ENCODE measurements at regions of chr17 and their contacts with region 1.

Region 1: DNA sequence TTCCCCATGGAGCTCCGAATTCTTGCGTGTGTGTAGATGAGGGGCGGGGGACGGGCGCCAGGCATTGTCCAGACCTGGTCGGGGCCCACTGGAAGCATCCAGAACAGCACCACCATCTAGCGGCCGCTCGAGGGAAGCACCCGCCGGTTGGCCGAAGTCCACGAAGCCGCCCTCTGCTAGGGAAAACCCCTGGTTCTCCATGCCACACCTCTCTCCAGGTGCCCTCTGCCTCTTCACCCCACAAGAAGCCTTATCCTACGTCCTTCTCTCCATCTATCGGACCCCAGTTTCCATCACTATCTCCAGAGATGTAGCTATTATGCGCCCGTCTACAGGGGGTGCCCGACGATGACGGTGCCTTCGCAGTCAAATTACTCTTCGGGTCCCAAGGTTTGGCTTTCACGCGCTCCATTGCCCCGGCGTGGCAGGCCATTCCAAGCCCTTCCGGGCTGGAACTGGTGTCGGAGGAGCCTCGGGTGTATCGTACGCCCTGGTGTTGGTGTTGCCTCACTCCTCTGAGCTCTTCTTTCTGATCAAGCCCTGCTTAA is 617 bp upstream of the SENP3 start:
- DNase-seq: no peak
- H3K4me3 ChIP-seq: peak overlapping the region; percentile 85
- H3K27me3 ChIP-seq: no peaks in the 10 kb centered on the region
- CTCF ChIP-seq: peak; percentile 92

Region 2: DNA sequence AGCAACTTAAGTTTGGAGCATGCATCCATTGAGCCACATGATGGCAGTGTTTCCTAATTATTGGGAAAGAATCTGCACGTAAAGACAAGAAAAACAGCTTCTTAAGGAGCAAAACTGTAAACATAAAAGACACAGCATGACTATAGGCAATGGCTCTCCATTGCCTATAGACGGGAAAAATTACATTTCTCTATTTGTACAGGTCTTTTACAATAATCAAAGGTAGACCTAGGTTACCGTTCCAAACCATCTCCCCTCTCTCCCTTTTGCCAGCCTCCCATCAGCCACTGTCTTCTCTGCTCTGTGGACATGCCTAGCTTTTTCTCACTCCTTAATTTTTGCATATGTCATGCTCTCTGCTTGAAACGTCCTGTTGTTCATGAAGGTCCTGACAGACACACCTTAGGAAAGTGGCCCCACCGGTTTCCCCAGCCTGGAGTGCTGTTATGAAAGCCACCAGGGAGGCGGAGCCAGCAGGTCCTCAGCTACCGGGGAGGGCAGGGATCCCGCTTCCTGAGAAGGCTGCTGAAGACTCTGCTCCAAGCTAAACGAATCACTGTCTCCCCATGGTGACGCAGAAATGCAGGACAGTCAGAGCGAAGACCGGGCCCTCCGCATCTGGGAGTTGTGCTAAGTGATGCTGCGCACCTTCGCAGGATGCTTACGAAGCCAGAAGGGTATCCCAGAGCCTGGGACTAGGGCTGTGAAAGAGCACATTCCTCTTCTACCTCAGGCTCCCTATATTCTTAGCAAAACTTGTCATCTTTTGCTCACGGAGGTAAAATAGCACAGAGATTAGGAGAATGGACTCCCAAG is 515.0 kb before region 1 on chr17:
- CTCF ChIA-PET with region 1: interaction called, 14 read pairs
- POLR2A ChIA-PET with region 1: no interaction called
- DNase-seq: peak; percentile 35
- H3K4me3 ChIP-seq: no peak overlapping the region
- H3K27me3 ChIP-seq: peaks cover 16% of the 10 kb centered on the region
- CTCF ChIP-seq: peak; percentile 68

Region 3: GRCh38 chr17:7435221-7435675 is 125.9 kb before region 1 on chr17 and contains the start of gene TMEM102:
- CTCF ChIA-PET with region 1: interaction called, 21 read pairs
- POLR2A ChIA-PET with region 1: interaction called, 3 read pairs
- DNase-seq: peak; percentile 79
- H3K4me3 ChIP-seq: peak within 1 kb of the TSS; percentile 44
- H3K27me3 ChIP-seq: peaks cover 13% of the 10 kb centered on the region
- CTCF ChIP-seq: no peak
- polyA plus RNA-seq, gene TMEM102: 1.8 and 3.0 TPM in 2 replicates

Region 4: DNA sequence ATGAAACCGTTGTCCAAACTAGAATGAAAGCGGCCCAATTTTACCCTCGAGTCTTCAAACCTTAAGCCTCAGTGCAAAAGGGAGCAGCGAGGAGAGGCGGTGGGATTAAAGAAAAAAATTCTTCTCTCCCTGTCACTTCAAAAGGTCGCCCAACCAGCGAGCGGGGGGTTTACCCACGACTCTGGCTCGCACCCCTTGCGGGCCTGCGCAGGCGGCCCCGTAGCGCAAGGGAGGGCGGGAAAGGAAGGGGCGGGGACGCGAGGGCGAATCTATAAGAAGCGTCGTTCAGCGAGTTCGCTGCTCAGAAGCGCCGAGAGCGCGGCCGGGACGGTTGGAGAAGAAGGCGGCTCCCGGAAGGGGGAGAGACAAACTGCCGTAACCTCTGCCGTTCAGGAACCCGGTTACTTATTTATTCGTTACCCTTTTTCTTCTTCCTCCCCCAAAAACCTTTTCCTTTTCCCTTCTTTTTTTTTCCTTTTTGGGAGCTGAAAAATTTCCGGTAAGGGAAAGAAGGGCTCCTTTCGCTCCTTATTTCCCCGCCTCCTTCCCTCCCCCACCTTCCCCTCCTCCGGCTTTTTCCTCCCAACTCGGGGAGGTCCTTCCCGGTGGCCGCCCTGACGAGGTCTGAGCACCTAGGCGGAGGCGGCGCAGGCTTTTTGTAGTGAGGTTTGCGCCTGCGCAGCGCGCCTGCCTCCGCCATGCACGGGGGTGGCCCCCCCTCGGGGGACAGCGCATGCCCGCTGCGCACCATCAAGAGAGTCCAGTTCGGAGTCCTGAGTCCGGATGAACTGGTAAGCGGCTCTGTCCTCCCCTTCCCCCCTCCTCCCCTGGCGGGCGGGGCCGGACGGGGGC is 76.8 kb before region 1 on chr17 and contains the start of gene POLR2A:
- CTCF ChIA-PET with region 1: interaction called, 10 read pairs
- POLR2A ChIA-PET with region 1: interaction called, 5 read pairs
- DNase-seq: peak; percentile 92
- H3K4me3 ChIP-seq: peak within 1 kb of the TSS; percentile 67
- H3K27me3 ChIP-seq: no peaks in the 10 kb centered on the region
- CTCF ChIP-seq: no peak
- polyA plus RNA-seq, gene POLR2A: 21.5 and 27.7 TPM in 2 replicates

Region 5: DNA sequence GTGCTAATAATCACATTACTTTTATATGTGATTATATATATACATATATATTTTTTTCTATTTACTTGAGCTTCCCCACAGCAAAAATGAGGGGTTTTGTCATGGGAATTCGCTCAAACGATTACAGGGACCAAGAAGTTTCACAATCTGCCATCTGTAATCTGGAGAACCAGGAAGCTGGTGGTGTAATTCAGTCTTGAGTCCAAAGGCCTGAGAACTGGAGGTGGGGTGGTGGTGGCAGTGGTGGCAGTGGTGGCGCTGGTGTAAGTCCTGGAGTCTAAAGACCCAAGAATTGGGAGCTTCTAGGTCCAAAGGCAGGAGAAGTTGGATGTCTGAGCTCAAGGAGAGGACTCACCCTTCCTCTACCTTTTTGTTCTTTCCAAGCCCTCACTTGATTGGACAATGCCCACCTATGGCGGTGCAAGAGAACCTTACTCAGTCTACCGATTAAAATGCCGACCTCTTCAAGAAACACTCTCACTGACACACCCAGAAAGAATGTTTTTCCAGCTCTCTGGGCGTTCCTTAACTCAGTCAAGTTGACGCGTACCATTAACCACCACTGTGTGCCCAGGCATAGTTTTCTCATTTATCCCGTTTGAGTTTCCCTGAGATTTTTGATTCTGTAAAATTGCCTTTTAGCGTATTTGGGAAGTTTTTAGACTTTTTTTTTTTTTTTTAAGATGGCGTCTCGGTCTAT is 45.0 kb before region 1 on chr17:
- CTCF ChIA-PET with region 1: interaction called, 95 read pairs
- POLR2A ChIA-PET with region 1: no interaction called
- DNase-seq: no peak
- H3K4me3 ChIP-seq: no peak overlapping the region
- H3K27me3 ChIP-seq: no peaks in the 10 kb centered on the region
- CTCF ChIP-seq: no peak

Region 6: GRCh38 chr17:7548585-7549400 is 12.3 kb before region 1 on chr17 and contains the start of gene TNFSF12:
- CTCF ChIA-PET with region 1: interaction called, 41 read pairs
- POLR2A ChIA-PET with region 1: interaction called, 3 read pairs
- DNase-seq: no peak
- H3K4me3 ChIP-seq: peak within 1 kb of the TSS; percentile 68
- H3K27me3 ChIP-seq: no peaks in the 10 kb centered on the region
- CTCF ChIP-seq: peak; percentile 25
- polyA plus RNA-seq, gene TNFSF12: 29.2 and 49.5 TPM in 2 replicates

Region 7: DNA sequence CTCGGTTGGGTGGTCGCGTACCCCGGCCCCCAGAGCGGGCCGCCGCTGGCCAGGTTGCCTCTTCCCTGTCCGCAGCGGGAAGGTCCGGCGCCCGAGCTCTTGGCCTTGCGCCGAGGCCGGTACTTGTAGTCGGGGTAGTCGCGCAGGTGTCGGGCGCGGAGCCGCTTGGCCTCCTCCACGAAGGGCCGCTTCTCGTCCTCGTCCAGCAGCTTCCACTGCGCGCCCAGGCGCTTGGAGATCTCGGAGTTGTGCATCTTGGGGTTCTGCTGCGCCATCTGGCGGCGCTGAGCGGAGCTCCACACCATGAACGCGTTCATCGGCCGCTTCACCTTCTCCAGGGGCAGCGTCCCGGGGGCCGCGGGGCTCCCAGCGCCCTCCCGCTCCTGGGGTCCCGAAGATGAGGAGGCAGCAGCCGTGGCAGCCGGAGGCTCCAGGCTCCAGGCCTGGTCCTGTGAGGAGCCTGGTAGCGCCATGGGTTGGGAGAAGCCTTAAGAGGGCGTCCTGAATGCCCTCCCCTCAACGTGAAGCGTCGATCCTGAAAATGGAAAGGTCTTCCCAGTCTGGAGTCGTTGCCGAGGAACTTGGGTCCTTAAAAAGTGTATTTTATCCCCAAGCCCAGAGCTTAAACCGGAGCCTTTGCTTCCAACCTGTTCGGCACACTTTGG is 28.2 kb after region 1 on chr17:
- CTCF ChIA-PET with region 1: interaction called, 21 read pairs
- POLR2A ChIA-PET with region 1: no interaction called
- DNase-seq: no peak
- H3K4me3 ChIP-seq: peak overlapping the region; percentile 22; the same call in 1 of the 2 replicates
- H3K27me3 ChIP-seq: no peaks in the 10 kb centered on the region
- CTCF ChIP-seq: peak; percentile 94

Region 8: GRCh38 chr17:7700510-7700909 is 139.4 kb after region 1 on chr17:
- CTCF ChIA-PET with region 1: no interaction called
- POLR2A ChIA-PET with region 1: no interaction called
- DNase-seq: no peak
- H3K4me3 ChIP-seq: no peak overlapping the region
- H3K27me3 ChIP-seq: peaks cover 5% of the 10 kb centered on the region
- CTCF ChIP-seq: no peak

Measured in BJ (cell line).